Gastrocnemius medialis (tissue), 4 donors: ENCODE measurements at regions of chr11 and their contacts with region 1.

Region 1: DNA sequence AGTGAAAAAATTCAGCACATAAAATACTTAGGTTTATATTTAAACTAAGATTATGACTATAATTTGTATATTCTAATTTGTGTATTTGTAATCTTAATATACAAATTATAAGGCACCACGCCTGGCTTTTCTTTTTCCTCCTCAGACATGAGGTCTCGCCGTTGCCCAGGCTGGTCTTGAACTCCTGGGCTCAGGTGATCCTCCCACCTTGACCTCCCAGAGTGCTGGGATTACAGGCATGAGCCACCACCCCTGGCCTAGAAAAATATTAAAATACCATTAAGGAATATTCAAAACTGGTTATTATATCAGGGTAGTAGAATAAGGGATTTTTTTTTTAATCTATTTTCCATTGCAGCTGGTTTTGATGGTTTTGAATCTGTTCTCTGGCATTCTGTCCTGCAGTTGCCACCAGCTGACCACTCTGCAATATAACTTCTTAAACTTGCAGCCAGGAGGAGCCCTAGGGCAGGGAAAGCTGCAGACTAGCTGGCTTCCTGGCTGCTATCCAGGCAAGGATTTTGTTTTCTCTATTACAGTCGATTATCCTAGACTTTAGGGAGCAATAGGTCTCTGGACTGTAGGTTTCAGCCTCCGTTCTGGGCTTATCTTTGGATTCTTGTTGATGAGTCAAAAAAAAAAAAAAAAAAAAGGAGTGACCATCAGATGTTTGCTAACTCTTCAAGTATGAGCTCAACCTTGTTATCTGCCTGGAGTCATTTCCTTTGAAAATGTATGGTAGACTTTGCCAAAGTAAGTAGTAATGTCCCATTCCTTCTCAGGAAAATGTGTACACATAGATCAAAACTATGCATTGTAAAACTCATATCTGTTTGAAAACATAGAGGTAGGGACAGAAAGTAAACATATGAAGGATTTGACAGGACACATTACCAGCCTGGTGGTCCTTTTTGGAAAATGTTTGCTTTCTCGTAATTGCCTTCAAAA is 13.2 kb downstream of the POLA2 start:
- DNase-seq: peak; percentile 69 to 73
- ATAC-seq: peak; percentile 87 to 92
- H3K4me3 ChIP-seq: no peak overlapping the region
- H3K27ac ChIP-seq: peak overlapping the region in 2 of 4 donors; percentile 22 to 30
- H3K4me1 ChIP-seq: peaks cover 0 to 5% of the 10 kb centered on the region in 2 donors
- H3K27me3 ChIP-seq: no peaks in the 10 kb centered on the region
- CTCF ChIP-seq: peak; percentile 79 to 93 (median 90)
- POLR2A ChIP-seq: no peak

Region 2: GRCh38 chr11:65260805-65261590 is 14.0 kb before region 1 on chr11:
- in situ Hi-C with region 1: no loop called
- intact Hi-C with region 1: no loop called
- DNase-seq: no peak
- ATAC-seq: peak; percentile 9 to 11
- H3K4me3 ChIP-seq: peak overlapping the region; percentile 75 to 89 (median 78)
- H3K27ac ChIP-seq: peak overlapping the region; percentile 87 to 97 (median 93)
- H3K4me1 ChIP-seq: peaks cover 11 to 12% of the 10 kb centered on the region in 2 donors
- H3K27me3 ChIP-seq: no peaks in the 10 kb centered on the region
- CTCF ChIP-seq: no peak
- POLR2A ChIP-seq: no peak

Region 3: GRCh38 chr11:65298655-65299179 is 23.7 kb after region 1 on chr11:
- in situ Hi-C with region 1: no loop called
- intact Hi-C with region 1: loop called (anchors 2 kb)
- DNase-seq: peak in 1 of 2 donors; percentile 49
- ATAC-seq: peak; percentile 20 to 25
- H3K4me3 ChIP-seq: no peak overlapping the region
- H3K27ac ChIP-seq: peak overlapping the region; percentile 53 to 79 (median 74)
- H3K4me1 ChIP-seq: peaks cover 20 to 41% of the 10 kb centered on the region in 2 donors
- H3K27me3 ChIP-seq: no peaks in the 10 kb centered on the region
- CTCF ChIP-seq: no peak
- POLR2A ChIP-seq: no peak